Common myeloid progenitor, CD34-positive (primary cell): ENCODE measurements at regions of chr11 and their contacts with region 1.

Region 1: DNA sequence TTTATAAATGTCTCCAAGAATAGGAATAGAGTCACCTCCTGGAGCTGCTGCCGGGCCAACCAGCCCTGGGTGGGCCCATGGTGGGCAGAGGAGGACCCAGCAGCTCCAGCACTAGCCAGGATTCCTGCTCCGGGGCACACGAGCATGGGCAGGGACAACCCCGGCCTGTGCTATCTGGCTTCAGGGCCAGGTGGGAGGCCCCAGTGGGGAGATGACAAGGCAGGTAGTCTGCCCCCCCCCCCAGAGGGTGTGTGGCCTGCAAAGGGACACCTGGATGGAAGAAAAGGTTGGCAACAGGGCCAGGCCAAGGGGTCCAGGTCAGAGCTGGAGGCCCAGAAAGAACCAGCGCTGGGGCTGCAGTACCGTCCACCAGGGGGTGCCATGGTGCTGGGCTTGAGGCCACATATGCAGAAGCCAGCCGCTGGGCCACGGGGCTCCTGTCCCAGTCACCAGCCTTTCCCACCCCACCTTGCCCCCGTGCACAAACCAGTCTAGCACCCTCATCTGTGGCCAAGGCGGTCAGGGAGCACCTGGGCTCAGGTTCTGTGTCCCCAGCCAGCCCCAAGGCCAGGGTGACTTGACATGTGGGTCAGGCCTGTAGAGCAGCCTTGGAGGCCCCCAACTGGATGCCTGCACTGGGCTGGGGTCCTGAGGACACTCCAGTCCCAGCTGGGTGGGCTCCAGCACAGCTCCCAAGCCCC is 3.5 kb downstream of the TSPAN32 start:
- DNase-seq: peak; percentile 70 to 82 (median 81)
- H3K4me3 ChIP-seq: peak overlapping the region in 6 of 7 experiments; percentile 10 to 95 (median 68)
- H3K27ac ChIP-seq: peak overlapping the region in 1 of 2 experiments; percentile 79
- H3K4me1 ChIP-seq: peaks cover 3 to 80% (median 71%) of the 10 kb centered on the region in 4 experiments
- H3K27me3 ChIP-seq: no peaks in the 10 kb centered on the region

Region 2: GRCh38 chr11:2186669-2187279 is 118.5 kb before region 1 on chr11:
- CTCF ChIA-PET with region 1: interaction called, 31 read pairs
- POLR2A ChIA-PET with region 1: no interaction called
- DNase-seq: peak; percentile 84 to 90 (median 89)
- H3K4me3 ChIP-seq: peak overlapping the region in 1 of 7 experiments; percentile 40
- H3K27ac ChIP-seq: no peak overlapping the region
- H3K4me1 ChIP-seq: peaks cover 5 to 41% (median 24%) of the 10 kb centered on the region in 4 experiments
- H3K27me3 ChIP-seq: no peaks in the 10 kb centered on the region

Region 3: DNA sequence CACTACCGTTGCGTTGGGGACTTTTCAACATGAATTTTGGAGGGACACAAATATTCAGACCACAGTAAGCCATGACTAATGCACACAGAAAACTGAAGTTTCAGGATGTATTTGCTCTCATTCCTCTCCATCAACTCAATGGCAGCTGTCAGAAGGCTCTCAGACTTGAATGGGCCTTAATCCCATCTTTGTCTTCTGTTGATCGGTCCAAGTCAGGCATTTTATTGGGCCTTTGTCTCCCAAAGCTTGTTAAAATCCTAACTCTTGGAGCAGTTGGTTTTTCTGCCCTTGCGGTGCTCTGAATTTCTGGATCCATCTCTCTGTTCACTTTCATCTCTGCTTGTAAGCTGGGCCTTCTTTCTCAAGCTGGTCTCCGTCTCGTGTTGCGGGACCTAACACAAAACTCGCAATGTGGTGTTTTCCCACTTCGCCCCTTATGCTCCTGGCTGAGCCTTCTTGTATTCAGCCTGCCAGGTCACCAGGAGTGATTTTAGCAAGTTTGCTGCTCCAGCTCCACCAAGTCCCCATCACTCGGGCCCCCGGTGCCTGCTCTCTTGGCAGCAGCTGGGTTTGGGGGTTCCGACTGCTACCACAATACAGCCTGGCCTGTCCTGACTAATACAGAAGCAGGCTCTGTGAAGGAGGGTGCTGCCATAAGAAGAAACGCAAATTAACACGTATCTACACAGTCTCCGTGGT is 23.5 kb after region 1 on chr11:
- CTCF ChIA-PET with region 1: interaction called, 11 read pairs
- POLR2A ChIA-PET with region 1: interaction called, 3 read pairs
- DNase-seq: no peak
- H3K4me3 ChIP-seq: no peak overlapping the region
- H3K27ac ChIP-seq: no peak overlapping the region
- H3K4me1 ChIP-seq: no peaks in the 10 kb centered on the region
- H3K27me3 ChIP-seq: peaks cover 0 to 28% (median 5%) of the 10 kb centered on the region in 5 experiments

Region 4: GRCh38 chr11:2377511-2378443 is 72.5 kb after region 1 on chr11:
- CTCF ChIA-PET with region 1: interaction called, 7 read pairs
- POLR2A ChIA-PET with region 1: interaction called, 10 read pairs
- DNase-seq: peak; percentile 38 to 69 (median 65)
- H3K4me3 ChIP-seq: peak overlapping the region; percentile 67 to 88 (median 79)
- H3K27ac ChIP-seq: peak overlapping the region; percentile 50 to 78
- H3K4me1 ChIP-seq: peaks cover 0 to 39% (median 35%) of the 10 kb centered on the region in 4 experiments
- H3K27me3 ChIP-seq: no peaks in the 10 kb centered on the region

Region 5: DNA sequence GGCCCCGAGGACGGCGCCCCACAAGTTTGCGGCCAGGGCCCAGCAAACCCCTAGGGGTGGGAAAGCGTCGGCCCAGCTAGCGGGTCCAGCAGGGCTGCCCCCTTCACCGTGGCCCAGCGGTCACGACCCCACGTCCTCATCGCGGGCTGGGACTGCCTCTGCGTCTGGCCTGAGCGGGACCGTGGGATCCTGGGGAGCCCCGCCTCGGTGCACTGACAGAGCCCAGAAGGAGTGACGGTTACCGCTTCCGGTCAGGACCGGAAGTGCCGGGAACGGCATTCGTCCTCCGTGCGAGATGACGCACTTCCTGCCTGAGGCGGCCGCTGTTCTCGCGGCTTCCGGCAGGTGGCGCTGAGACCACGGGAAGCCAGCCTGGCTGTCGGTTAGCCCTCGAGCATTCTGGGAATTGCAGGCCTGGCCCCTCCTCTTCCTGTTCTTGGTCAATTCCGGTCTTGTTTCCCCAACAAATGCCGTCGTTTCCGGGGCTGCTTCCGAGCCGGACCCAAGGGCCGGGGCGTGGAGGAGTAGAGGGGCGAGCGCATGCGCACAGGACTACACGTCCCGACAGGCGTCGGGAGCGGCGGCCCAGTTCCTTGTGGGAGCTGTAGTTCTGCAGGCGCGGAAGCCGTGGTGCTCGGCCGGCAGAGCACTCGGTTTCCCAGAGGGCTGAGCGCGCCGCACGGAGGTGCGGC is 94.9 kb after region 1 on chr11 and contains the start of gene TSSC4:
- CTCF ChIA-PET with region 1: interaction called, 90 read pairs
- POLR2A ChIA-PET with region 1: interaction called, 7 read pairs
- DNase-seq: peak; percentile 100
- H3K4me3 ChIP-seq: peak within 1 kb of the TSS; percentile 90 to 100 (median 99)
- H3K27ac ChIP-seq: peak within 1 kb of the TSS; percentile 96 to 97
- H3K4me1 ChIP-seq: peaks cover 0 to 26% (median 25%) of the 10 kb centered on the region in 4 experiments
- H3K27me3 ChIP-seq: no peaks in the 10 kb centered on the region

Region 6: GRCh38 chr11:2420502-2421225 is 115.4 kb after region 1 on chr11:
- CTCF ChIA-PET with region 1: interaction called, 220 read pairs
- POLR2A ChIA-PET with region 1: interaction called, 6 read pairs
- DNase-seq: peak; percentile 71 to 84 (median 81)
- H3K4me3 ChIP-seq: no peak overlapping the region
- H3K27ac ChIP-seq: no peak overlapping the region
- H3K4me1 ChIP-seq: peaks cover 0 to 10% (median 9%) of the 10 kb centered on the region in 4 experiments
- H3K27me3 ChIP-seq: no peaks in the 10 kb centered on the region